ENCODE measurements at regions of chr17 and their contacts with region 1.

Region 1: DNA sequence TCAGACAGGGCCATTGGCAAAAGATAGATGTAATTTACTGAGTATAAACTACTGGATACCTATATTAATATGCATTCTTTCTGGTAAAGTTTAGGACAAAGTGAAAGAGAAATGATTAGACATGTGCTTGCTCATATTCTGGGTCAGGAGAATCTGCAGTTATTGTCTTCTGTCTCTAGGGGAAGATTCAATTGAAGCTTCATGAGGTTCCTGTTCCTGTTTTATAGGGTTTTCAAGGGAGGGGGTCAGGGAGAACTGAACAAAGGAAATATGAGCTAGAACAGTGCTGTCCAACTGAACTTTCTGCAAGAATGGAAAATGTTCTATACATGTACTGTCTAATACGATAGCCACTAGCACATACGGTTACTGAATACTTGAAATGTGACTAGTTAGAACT is 59.3 kb upstream of the CORO6 start:
- DNase-seq: peak; percentile 51 to 84 (median 79)
- H3K4me3 ChIP-seq: no peak overlapping the region
- H3K27ac ChIP-seq: peak overlapping the region in 1 of 2 experiments; percentile 17
- H3K4me1 ChIP-seq: peaks cover 23 to 42% (median 33%) of the 10 kb centered on the region in 4 experiments
- H3K27me3 ChIP-seq: no peaks in the 10 kb centered on the region

Region 2: DNA sequence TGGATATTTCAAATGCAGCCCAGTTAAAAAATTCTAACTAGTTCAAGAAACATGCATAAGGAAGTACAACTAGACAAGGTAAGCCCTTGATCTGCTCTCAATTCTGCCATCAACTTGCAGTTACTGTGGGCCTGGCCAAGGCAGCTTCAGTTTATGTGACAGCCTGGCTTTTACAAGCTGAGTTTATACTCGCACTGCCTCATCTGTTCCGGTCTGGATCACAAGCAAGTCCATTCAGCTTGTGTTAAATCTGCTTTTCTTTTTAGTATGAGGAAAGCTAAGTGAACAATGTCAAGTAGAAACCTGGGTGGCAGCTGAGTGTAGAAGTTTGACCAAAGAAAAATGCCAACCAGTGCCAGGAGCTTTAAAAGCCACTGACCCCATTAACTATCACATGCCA is 17.2 kb after region 1 on chr17:
- CTCF ChIA-PET with region 1: interaction called, 12 read pairs
- POLR2A ChIA-PET with region 1: no interaction called
- DNase-seq: no peak
- H3K4me3 ChIP-seq: no peak overlapping the region
- H3K27ac ChIP-seq: peak overlapping the region in 1 of 2 experiments; percentile 36
- H3K4me1 ChIP-seq: peaks cover 3 to 30% (median 11%) of the 10 kb centered on the region in 4 experiments
- H3K27me3 ChIP-seq: no peaks in the 10 kb centered on the region

Region 3: GRCh38 chr17:29722411-29723198 is 40.6 kb after region 1 on chr17:
- CTCF ChIA-PET with region 1: interaction called, 14 read pairs
- POLR2A ChIA-PET with region 1: no interaction called
- DNase-seq: peak; percentile 87 to 98 (median 96)
- H3K4me3 ChIP-seq: peak overlapping the region in 5 of 7 experiments; percentile 5 to 68 (median 37)
- H3K27ac ChIP-seq: peak overlapping the region; percentile 60 to 82
- H3K4me1 ChIP-seq: peaks cover 49 to 80% (median 63%) of the 10 kb centered on the region in 4 experiments
- H3K27me3 ChIP-seq: no peaks in the 10 kb centered on the region

Region 4: DNA sequence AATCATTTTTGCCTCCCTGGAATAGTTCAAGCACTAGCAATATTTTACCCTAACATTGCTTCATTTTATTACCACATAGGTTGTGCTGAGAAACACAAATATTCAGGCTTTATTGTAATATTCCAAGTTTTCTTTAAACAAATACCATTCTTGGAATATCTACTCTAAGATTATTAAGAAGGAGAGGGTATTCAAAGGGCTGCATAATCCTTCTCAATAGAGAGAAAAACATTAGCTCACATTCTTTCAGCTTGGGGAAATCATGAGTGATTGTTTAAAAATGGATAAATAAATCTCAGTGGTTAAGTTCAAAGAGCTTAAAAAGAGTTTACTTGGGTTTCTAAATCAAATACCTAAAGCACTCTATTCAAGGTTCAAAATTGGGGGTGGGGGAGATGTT is 52.6 kb after region 1 on chr17:
- CTCF ChIA-PET with region 1: no interaction called
- POLR2A ChIA-PET with region 1: no interaction called
- DNase-seq: no peak
- H3K4me3 ChIP-seq: no peak overlapping the region
- H3K27ac ChIP-seq: no peak overlapping the region
- H3K4me1 ChIP-seq: peaks cover 4 to 13% (median 6%) of the 10 kb centered on the region in 4 experiments
- H3K27me3 ChIP-seq: no peaks in the 10 kb centered on the region